ENCODE measurements at regions of chr20 and their contacts with region 1.

Region 1: GRCh38 chr20:62606551-62607201 is 35.6 kb upstream of the SLCO4A1 start:
- DNase-seq: no peak
- ATAC-seq: peak; percentile 61
- H3K4me3 ChIP-seq: no peak overlapping the region
- H3K27ac ChIP-seq: no peak overlapping the region
- H3K4me1 ChIP-seq: no peaks in the 10 kb centered on the region
- H3K27me3 ChIP-seq: peaks cover 55% of the 10 kb centered on the region
- CTCF ChIP-seq: no peak
- POLR2A ChIP-seq: no peak
- RAD21 ChIP-seq: no peak

Region 2: GRCh38 chr20:61976644-61977490 is 629.8 kb before region 1 on chr20:
- CTCF ChIA-PET with region 1: no interaction called
- POLR2A ChIA-PET with region 1: no interaction called
- dilution Hi-C with region 1: no loop called
- in situ Hi-C with region 1: no loop called
- intact Hi-C with region 1: no loop called
- DNase-seq: no peak
- ATAC-seq: no peak; the same call in 1 of the 2 replicates
- H3K4me3 ChIP-seq: no peak overlapping the region
- H3K27ac ChIP-seq: no peak overlapping the region
- H3K4me1 ChIP-seq: no peaks in the 10 kb centered on the region
- H3K27me3 ChIP-seq: no peaks in the 10 kb centered on the region
- CTCF ChIP-seq: no peak
- POLR2A ChIP-seq: no peak
- RAD21 ChIP-seq: no peak

Region 3: DNA sequence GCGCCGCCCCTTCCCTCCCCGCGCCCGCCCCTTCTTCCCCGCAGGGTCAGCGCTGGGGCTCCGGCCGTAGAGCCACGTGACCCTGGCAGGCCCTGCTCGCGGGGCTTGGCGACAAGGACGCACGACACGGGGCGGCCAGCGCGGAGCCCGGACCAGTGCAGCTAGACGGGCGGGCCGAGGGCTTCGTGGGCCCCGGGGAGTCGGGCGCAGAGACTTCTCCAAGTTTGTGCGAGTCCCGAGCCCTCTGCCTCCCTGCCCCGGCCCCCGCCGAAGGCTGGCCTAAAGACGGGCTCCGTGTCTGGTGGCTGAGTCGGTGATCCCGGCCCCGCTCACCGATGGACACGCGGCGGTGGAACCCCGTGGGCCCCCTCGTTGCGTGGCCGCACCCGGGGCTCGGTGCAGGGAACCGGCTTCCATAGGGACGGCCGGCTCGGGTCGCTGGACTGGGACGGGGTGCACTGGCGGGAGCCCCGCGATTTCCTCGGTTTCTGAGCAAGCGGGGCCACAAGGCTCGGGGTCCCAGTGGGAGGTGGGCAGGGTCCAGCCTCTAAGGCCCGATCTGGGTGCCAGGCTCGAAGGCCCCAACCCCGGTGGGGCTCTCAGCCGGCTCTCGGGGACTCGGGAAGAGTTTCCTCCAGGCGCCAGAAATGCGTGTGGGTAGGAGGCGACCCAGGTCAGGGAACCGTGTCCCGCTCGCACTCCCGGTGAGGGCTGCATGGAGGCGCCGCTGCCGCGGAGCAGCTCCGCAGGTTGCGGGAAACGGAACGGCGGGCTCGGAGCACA is 130.4 kb before region 1 on chr20:
- CTCF ChIA-PET with region 1: no interaction called
- POLR2A ChIA-PET with region 1: no interaction called
- dilution Hi-C with region 1: no loop called
- in situ Hi-C with region 1: no loop called
- intact Hi-C with region 1: no loop called
- DNase-seq: no peak
- ATAC-seq: no peak; the same call in 1 of the 2 replicates
- H3K4me3 ChIP-seq: no peak overlapping the region
- H3K27ac ChIP-seq: no peak overlapping the region
- H3K4me1 ChIP-seq: no peaks in the 10 kb centered on the region
- H3K27me3 ChIP-seq: peaks cover 87% of the 10 kb centered on the region
- CTCF ChIP-seq: no peak
- POLR2A ChIP-seq: no peak
- RAD21 ChIP-seq: no peak

Region 4: GRCh38 chr20:62539198-62540045 is 67.3 kb before region 1 on chr20:
- CTCF ChIA-PET with region 1: no interaction called
- POLR2A ChIA-PET with region 1: interaction called, 18 read pairs
- dilution Hi-C with region 1: no loop called
- in situ Hi-C with region 1: no loop called
- intact Hi-C with region 1: no loop called
- DNase-seq: no peak
- ATAC-seq: no peak
- H3K4me3 ChIP-seq: no peak overlapping the region
- H3K27ac ChIP-seq: no peak overlapping the region
- H3K4me1 ChIP-seq: no peaks in the 10 kb centered on the region
- H3K27me3 ChIP-seq: peaks cover 40% of the 10 kb centered on the region
- CTCF ChIP-seq: no peak
- POLR2A ChIP-seq: no peak
- RAD21 ChIP-seq: no peak

Region 5: GRCh38 chr20:62662422-62662821 is 55.7 kb after region 1 on chr20:
- CTCF ChIA-PET with region 1: no interaction called
- POLR2A ChIA-PET with region 1: no interaction called
- dilution Hi-C with region 1: no loop called
- in situ Hi-C with region 1: no loop called
- intact Hi-C with region 1: no loop called
- DNase-seq: peak; percentile 80
- ATAC-seq: peak; percentile 86
- H3K4me3 ChIP-seq: no peak overlapping the region
- H3K27ac ChIP-seq: no peak overlapping the region
- H3K4me1 ChIP-seq: peaks cover 5% of the 10 kb centered on the region
- H3K27me3 ChIP-seq: no peaks in the 10 kb centered on the region
- CTCF ChIP-seq: no peak
- POLR2A ChIP-seq: no peak
- RAD21 ChIP-seq: no peak

Measured in IMR-90 (cell line).